MCF 10A (cell line): ENCODE measurements at regions of chr10 and their contacts with region 1.

Region 1: GRCh38 chr10:88260329-88261051 is 322.6 kb downstream of the RNLS start:
- DNase-seq: no peak
- H3K4me3 Mint-ChIP-seq: no peak overlapping the region
- H3K27ac Mint-ChIP-seq: no peak overlapping the region
- H3K4me1 Mint-ChIP-seq: no peaks in the 10 kb centered on the region
- H3K27me3 Mint-ChIP-seq: no peaks in the 10 kb centered on the region
- CTCF ChIP-seq: no peak

Region 2: GRCh38 chr10:88042160-88043100 is 218.1 kb before region 1 on chr10:
- CTCF ChIA-PET with region 1: no interaction called
- POLR2A ChIA-PET with region 1: no interaction called
- intact Hi-C with region 1: no loop called
- DNase-seq: peak; percentile 92
- H3K4me3 Mint-ChIP-seq: peak overlapping the region; percentile 56
- H3K27ac Mint-ChIP-seq: peak overlapping the region; percentile 95
- H3K4me1 Mint-ChIP-seq: peaks cover 20% of the 10 kb centered on the region
- H3K27me3 Mint-ChIP-seq: no peaks in the 10 kb centered on the region
- CTCF ChIP-seq: no peak

Region 3: DNA sequence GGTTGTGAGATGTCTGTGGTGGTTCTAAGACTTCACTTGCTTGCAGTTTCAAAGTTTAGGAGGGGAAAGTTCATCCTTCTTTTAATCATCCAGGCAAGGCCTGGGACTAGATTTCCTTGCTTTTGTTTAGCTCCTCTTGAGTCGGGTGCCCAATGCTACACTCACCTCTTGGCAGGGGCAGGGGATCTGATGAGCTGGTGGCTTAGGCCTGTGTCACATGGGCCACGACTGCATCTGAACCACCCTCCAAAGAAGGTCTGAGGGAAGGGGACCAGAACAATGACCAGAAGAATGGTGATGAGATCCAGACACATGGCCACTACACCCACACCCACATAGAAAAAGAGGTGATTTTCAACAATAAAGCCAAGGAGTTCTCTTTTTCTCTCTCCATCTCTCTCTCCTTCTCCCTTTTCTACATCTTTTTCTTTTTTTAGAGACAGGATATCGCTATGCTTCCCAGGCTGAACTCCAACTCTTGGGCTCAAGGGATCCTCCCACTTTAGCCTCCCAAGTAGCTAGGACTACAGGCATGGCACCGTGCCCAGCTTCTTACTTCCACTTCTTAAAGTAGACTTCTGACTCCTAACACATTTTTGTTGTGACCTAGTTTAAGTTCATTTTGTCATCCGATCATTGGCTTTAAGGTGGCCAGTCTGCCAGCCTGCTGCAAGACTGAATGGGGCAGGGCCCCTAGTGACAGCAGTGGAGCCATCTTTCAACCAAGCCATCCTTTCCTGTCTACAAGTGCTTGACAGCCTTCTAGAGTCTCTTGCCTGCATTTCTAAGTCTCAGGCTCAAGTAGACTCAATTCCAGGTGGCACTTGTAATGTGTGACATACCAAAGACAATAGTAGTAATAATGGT is 28.2 kb before region 1 on chr10:
- CTCF ChIA-PET with region 1: no interaction called
- POLR2A ChIA-PET with region 1: no interaction called
- intact Hi-C with region 1: no loop called
- DNase-seq: peak; percentile 32
- H3K4me3 Mint-ChIP-seq: no peak overlapping the region
- H3K27ac Mint-ChIP-seq: no peak overlapping the region
- H3K4me1 Mint-ChIP-seq: peaks cover 4% of the 10 kb centered on the region
- H3K27me3 Mint-ChIP-seq: no peaks in the 10 kb centered on the region
- CTCF ChIP-seq: no peak

Region 4: GRCh38 chr10:88270871-88271713 is 10.6 kb after region 1 on chr10:
- CTCF ChIA-PET with region 1: interaction called, 3 read pairs
- POLR2A ChIA-PET with region 1: interaction called, 13 read pairs
- intact Hi-C with region 1: no loop called
- DNase-seq: peak; percentile 13
- H3K4me3 Mint-ChIP-seq: no peak overlapping the region
- H3K27ac Mint-ChIP-seq: peak overlapping the region; percentile 42
- H3K4me1 Mint-ChIP-seq: peaks cover 11% of the 10 kb centered on the region
- H3K27me3 Mint-ChIP-seq: no peaks in the 10 kb centered on the region
- CTCF ChIP-seq: no peak

Region 5: GRCh38 chr10:88318803-88319202 is 58.3 kb after region 1 on chr10:
- CTCF ChIA-PET with region 1: no interaction called
- POLR2A ChIA-PET with region 1: no interaction called
- intact Hi-C with region 1: no loop called
- DNase-seq: peak; percentile 9
- H3K4me3 Mint-ChIP-seq: no peak overlapping the region
- H3K27ac Mint-ChIP-seq: no peak overlapping the region
- H3K4me1 Mint-ChIP-seq: peaks cover 5% of the 10 kb centered on the region
- H3K27me3 Mint-ChIP-seq: no peaks in the 10 kb centered on the region
- CTCF ChIP-seq: peak; percentile 29